Activated CD4-positive, alpha-beta T cell treated with anti-CD3 and anti-CD28 coated beads, Interleukin-2, amount 10 ng/mL, durations not matched to agents 24 days and 14 days (primary cell): ENCODE measurements at regions of chr12 and their contacts with region 1.

Region 1: DNA sequence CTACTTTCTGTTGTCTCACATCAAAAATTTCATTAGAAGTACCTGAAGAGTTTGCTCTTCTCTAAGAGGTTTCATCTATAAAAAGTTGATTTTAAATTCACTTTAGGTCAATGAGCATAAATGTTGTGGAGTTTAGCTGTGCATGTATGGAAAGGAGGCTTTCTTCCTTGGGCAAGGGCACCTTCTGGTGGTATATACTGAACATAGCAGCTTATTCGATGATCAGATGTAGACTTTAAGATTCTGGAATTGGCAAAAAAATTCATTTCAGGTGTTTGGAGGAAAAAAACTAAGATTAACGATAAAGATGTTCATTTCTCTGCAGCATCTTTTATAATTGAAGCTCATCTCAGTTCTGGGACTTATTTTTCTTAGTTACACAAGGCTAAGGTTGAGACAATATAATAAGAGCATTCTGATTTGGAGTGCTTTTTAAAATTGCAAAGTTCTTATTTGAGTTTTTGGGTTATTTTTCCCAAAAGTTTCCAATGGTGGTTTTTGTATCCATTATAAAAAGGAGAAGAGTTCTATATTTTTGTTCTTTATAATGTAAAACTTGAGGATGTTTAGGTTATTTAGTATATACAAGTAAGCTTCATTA is 46.8 kb downstream of the TMEM117 start:
- DNase-seq: peak; percentile 76
- H3K4me3 Mint-ChIP-seq: no peak overlapping the region
- H3K27ac Mint-ChIP-seq: no peak overlapping the region
- H3K4me1 Mint-ChIP-seq: no peaks in the 10 kb centered on the region
- H3K27me3 Mint-ChIP-seq: no peaks in the 10 kb centered on the region

Region 2: DNA sequence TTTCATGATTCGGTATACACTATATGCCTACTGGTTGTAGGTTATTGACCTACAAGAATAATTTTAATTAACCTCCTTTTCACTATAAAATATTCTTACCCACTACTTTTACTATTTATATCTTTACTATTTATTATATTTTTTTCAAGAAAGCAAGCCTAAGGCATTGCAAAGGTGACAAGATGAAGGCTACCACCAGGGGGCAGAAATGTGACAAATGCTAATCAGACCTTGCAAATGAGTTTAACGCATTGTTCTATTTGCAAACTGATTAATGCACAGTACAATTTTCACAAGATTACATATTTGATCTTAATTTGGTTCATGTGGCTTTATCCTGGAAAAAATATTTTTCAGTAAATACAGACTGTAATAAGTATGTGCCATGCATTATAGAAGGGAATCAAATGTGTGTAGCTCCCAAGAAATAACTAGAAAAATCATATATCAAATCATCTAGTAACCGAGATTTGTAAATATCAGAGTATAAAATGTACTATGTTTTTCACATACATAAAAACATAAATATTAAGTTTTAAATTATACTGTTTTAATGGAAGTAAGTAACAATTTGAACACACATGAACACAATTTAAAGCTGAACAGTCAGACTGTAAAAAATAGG is 437.6 kb before region 1 on chr12:
- intact Hi-C with region 1: loop called (anchors 1 kb)
- DNase-seq: peak; percentile 83
- H3K4me3 Mint-ChIP-seq: no peak overlapping the region
- H3K27ac Mint-ChIP-seq: no peak overlapping the region
- H3K4me1 Mint-ChIP-seq: no peaks in the 10 kb centered on the region
- H3K27me3 Mint-ChIP-seq: no peaks in the 10 kb centered on the region

Region 3: DNA sequence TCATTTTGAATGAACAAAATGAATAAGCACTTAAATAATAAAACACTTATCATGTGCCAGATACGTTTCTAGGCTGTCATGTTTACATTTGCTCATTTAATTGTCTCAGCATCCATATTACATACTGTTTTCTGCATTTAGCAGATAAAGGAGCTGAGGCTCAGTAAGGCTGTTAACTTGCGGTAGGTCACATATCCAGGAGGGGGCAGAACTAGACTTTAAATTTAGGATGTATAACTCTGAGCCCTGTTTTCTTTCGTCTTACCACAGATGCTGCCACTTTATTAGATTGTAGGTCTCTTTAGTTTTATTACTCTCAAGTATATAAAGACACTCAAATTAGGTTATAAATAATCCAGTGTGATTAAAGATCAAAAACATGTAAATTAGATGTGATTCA is 106.2 kb before region 1 on chr12:
- intact Hi-C with region 1: loop called (anchors 1 kb)
- DNase-seq: peak; percentile 64
- H3K4me3 Mint-ChIP-seq: no peak overlapping the region
- H3K27ac Mint-ChIP-seq: no peak overlapping the region
- H3K4me1 Mint-ChIP-seq: no peaks in the 10 kb centered on the region
- H3K27me3 Mint-ChIP-seq: no peaks in the 10 kb centered on the region

Region 4: DNA sequence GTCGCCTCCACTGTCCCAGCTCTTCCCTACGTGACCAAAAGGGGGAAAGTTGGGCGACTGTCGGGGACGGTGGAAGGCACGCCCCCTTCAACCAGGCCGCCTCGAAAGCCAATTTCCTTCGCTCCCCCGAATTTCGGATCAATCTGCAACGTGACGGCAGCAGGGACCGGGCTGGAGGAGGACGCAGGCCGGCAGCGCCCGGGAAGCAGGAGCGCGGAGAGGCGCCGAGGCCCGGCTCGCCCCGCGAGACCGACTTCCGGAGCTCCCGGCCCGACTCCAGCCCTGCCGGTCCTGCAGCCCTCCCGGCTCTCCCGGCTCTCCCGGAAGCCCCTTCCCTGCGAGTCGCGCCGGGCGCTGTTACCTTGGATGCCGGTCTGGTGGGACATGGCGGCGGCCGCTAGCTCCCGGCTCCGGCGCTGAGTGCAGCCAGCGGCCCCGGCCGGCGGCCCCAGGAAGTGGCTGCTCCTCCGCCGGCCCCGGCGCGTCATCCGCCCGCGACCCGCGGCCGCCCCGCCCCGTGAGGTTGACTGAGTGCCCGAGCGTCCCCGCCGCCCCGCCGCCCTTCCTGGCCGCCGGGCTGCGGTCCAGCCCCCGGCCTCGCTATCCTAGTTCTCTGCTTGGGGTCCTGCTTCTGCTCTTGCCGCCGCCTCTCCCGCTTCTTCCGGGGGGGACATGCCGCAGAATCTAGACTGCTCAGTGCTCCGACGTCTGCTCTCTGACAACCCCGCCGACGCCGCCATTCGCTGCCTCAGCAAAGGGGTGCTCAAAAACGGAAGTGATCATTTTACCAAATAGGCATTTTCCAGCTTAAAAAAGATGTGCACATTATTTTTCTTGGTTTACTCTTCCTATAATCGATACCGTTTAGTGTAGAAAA is 76.6 kb before region 1 on chr12 and contains the start of gene TWF1:
- intact Hi-C with region 1: loop called (anchors 1 kb)
- DNase-seq: peak; percentile 97
- H3K4me3 Mint-ChIP-seq: peak within 1 kb of the TSS; percentile 94
- H3K27ac Mint-ChIP-seq: peak within 1 kb of the TSS; percentile 100
- H3K4me1 Mint-ChIP-seq: peaks cover 15% of the 10 kb centered on the region
- H3K27me3 Mint-ChIP-seq: no peaks in the 10 kb centered on the region
- total RNA-seq, gene TWF1: 27.0 and 28.3 TPM in 2 replicates

Region 5: DNA sequence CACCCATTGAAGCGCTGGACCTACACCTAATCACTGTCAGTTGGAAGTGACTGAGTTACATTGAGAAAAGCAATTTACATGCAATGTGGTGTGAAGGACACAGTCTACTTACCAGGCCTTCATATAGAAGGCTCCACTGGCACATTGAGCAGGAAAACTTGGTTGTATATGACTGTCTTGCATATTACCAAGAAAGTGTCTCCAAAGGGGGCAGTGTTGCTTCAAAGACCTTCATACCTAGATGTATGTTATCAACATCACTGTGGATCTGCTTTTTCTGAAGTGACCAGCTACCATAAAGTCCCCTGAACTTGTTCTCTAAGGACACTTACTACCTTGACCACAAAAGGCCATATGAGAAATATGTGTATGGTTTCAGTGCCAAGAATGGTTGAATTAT is 929.4 kb after region 1 on chr12:
- intact Hi-C with region 1: no loop called
- DNase-seq: peak; percentile 87
- H3K4me3 Mint-ChIP-seq: no peak overlapping the region
- H3K27ac Mint-ChIP-seq: no peak overlapping the region
- H3K4me1 Mint-ChIP-seq: peaks cover 21% of the 10 kb centered on the region
- H3K27me3 Mint-ChIP-seq: no peaks in the 10 kb centered on the region